HEK293 (cell line): ENCODE measurements at regions of chr6 and their contacts with region 1.

Region 1: GRCh38 chr6:33323623-33323948 is 6.0 kb upstream of the ZBTB22 start:
- H3K4me3 ChIP-seq: peak overlapping the region; percentile 78
- H3K27ac ChIP-seq: peak overlapping the region; percentile 65
- H3K4me1 ChIP-seq: peaks cover 20% of the 10 kb centered on the region
- CTCF ChIP-seq: no peak

Region 2: GRCh38 chr6:33147807-33148666 is 175.5 kb before region 1 on chr6:
- CTCF ChIA-PET with region 1: no interaction called
- POLR2A ChIA-PET with region 1: no interaction called
- H3K4me3 ChIP-seq: no peak overlapping the region
- H3K27ac ChIP-seq: no peak overlapping the region
- H3K4me1 ChIP-seq: no peaks in the 10 kb centered on the region
- CTCF ChIP-seq: 0 out of 2 replicates have a peak, but pooled peaks have one; percentile 30

Region 3: DNA sequence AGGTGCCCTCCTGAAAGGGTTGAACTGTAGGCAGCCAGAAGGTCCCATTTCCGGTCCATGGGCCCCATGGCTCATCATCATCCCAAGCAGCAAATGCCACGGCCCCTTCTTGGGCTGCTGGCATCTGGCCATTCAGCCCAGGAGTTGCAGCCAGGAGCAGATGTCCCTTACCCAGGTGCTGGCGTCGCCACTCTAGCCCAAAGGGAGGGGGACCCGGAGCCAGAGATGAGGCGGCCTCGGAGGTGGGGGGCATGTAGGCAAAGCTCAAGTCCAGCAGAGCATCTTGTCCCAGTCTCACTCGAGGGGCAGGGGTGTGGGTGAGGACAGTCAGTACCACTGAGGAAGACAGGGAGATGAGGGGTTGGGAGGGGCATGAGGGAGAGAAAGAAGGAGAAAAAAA is 18.5 kb before region 1 on chr6:
- CTCF ChIA-PET with region 1: interaction called, 10 read pairs
- POLR2A ChIA-PET with region 1: interaction called, 57 read pairs
- H3K4me3 ChIP-seq: no peak overlapping the region
- H3K27ac ChIP-seq: no peak overlapping the region
- H3K4me1 ChIP-seq: no peaks in the 10 kb centered on the region
- CTCF ChIP-seq: no peak

Region 4: DNA sequence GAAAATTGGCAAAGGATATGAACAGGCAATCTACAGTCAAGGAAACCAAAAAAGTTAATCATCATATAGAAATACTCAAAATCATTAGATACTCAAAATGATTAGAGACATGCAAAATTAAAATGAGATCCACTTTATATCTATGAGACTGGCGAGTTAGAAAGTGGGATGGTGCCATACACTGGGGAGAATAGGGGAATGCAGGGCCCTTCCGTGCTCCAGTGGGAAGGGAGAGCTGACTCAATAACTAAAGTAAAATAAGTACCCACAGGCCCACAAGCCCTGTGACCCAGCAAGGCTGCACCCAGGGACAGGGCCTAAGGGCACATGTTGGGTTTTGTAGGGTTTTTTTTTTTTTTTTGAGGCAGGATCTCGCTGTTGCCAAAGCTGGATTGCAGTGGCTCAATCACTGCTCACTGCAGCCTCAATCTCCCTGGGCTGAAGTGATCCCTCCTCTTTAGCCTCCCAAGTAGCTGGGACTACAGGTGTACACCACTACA is 211.6 kb after region 1 on chr6:
- CTCF ChIA-PET with region 1: no interaction called
- POLR2A ChIA-PET with region 1: no interaction called
- H3K4me3 ChIP-seq: no peak overlapping the region
- H3K27ac ChIP-seq: no peak overlapping the region
- H3K4me1 ChIP-seq: no peaks in the 10 kb centered on the region
- CTCF ChIP-seq: no peak